Motor neuron (in vitro differentiated cells): ENCODE measurements at regions of chr5 and their contacts with region 1.

Region 1: DNA sequence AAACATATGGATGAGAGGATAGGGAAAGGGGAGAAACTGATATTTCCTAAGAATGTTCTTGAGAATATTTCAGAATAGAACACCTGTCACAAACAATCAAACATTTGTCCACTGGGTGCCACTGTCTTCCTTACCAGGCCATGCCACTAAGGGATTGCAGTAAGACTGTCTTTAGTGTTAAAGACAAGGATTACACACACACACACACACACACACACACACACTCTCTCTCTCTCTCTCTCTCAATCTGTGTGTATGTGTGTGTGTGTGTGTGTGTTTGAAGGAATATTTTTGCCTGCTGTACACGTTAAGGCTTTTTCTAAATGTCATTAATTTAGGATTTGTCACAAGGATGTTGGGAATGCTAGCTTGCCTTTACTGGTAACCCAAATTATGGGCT is 54.4 kb downstream of the CCDC192 start:
- ATAC-seq: peak; percentile 43 to 89 (median 78)
- H3K4me3 ChIP-seq: no peak overlapping the region
- H3K27ac ChIP-seq: no peak overlapping the region
- H3K4me1 ChIP-seq: peaks cover 6 to 11% of the 10 kb centered on the region in 2 donors

Region 2: GRCh38 chr5:127875235-127876021 is 117.9 kb after region 1 on chr5:
- in situ Hi-C with region 1: loop called in 2 of 9 experiments (anchors 25 kb)
- ATAC-seq: peak; percentile 65 to 97 (median 94)
- H3K4me3 ChIP-seq: peak overlapping the region in 1 of 5 donors; percentile 4
- H3K27ac ChIP-seq: peak overlapping the region in 1 of 2 donors; percentile 45
- H3K4me1 ChIP-seq: peaks cover 30 to 31% of the 10 kb centered on the region in 2 donors

Region 3: DNA sequence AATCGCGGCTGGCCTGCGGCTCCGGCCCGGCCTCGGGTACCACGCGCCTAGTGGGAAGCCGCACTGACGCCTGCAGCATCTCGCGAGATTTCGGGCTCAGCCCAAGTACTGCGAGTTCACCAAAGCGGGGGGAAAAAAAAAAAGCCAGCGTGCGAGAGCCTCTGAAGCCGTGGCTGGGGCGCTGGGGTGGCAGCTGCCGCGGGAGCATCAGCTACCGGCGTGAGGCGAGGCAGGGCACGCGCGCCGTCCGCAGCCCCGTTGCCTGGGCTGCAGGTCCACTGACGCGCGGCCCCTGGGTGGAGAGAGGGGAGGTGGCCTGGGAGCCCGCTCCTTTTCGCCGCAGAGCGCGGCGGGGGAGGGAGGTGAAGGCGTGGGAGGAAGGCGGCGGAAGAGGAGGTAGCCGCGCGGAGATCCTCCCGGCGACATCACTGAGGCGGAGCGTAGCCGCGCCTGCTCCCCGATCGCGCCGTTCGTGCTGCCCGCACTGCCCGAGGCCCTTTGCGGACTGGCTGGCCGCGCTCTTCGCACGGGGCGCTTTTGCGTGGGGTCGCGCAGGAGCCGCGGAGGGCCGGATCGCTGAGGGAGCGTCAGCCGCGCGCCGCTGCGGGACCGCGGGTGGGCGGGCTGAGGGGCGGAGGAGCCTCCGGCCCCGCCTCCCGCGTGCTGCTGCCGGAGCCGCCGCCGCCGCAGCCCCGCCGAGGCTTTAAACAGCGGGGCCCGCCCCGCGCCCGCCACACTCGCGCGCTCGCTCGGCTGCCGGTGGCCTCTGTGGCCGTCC is 325.6 kb after region 1 on chr5 and contains the start of gene SLC12A2:
- in situ Hi-C with region 1: loop called in 1 of 9 experiments (anchors 25 kb)
- ATAC-seq: peak; percentile 67 to 81 (median 76)
- H3K4me3 ChIP-seq: peak within 1 kb of the TSS; percentile 67 to 86 (median 71)
- H3K27ac ChIP-seq: peak within 1 kb of the TSS; percentile 94 to 95
- H3K4me1 ChIP-seq: peaks cover 23 to 31% of the 10 kb centered on the region in 2 donors
- total RNA-seq, gene SLC12A2: 20.4 to 51.0 (median 29.1) TPM